ENCODE measurements at regions of chr5 and their contacts with region 1.

Region 1: GRCh38 chr5:134041570-134042411 is 37.0 kb upstream of the VDAC1 start:
- DNase-seq: no peak

Region 2: GRCh38 chr5:133735327-133735726 is 306.5 kb before region 1 on chr5:
- CTCF ChIA-PET with region 1: no interaction called
- POLR2A ChIA-PET with region 1: no interaction called
- DNase-seq: no peak

Region 3: DNA sequence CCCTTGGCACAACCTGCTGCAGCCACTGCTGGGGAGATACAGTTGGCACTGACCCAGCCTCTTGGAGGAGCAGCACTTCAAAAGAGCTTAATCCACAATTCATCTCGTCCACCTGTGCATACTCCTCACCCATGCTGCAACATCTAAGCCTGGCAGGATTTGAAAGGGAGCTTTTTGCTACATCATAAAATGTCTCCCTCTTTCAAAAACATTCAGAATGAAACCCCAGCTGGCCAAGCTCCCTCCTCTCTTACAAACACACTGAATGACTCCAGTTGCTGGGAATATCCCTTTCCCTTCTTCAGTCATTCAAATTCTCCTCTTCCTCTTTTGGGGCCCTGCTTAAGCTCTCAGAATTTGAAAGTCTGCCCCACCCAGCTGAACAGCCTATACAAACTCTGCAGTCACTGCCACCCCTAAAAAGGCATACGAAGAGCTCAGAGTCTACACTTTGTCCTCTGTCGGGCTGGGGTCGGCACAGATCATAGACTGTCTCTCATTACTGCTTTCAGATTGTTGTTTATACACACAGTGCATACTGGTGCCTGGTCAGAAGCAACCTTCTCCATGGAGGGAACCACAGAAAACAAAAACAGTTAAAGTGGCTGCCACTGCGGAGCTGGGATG is 64.5 kb before region 1 on chr5:
- CTCF ChIA-PET with region 1: no interaction called
- POLR2A ChIA-PET with region 1: no interaction called
- DNase-seq: no peak

Region 4: GRCh38 chr5:133996683-133997252 is 45.0 kb before region 1 on chr5:
- CTCF ChIA-PET with region 1: interaction called, 12 read pairs
- POLR2A ChIA-PET with region 1: no interaction called
- DNase-seq: peak; percentile 45

Region 5: GRCh38 chr5:134140530-134141201 is 98.9 kb after region 1 on chr5:
- CTCF ChIA-PET with region 1: interaction called, 76 read pairs
- POLR2A ChIA-PET with region 1: interaction called, 4 read pairs
- DNase-seq: peak; percentile 58

Region 6: GRCh38 chr5:134145779-134146581 is 104.2 kb after region 1 on chr5:
- CTCF ChIA-PET with region 1: interaction called, 76 read pairs
- POLR2A ChIA-PET with region 1: interaction called, 4 read pairs
- DNase-seq: peak; percentile 64

Measured in HEK293T (cell line).